Prostate gland (tissue), 2 donors: ENCODE measurements at regions of chr6 and their contacts with region 1.

Region 1: GRCh38 chr6:2353412-2354137 is 108.2 kb upstream of the GMDS start:
- DNase-seq: peak; percentile 62
- H3K4me3 ChIP-seq: no peak overlapping the region
- H3K27ac ChIP-seq: no peak overlapping the region
- H3K4me1 ChIP-seq: no peaks in the 10 kb centered on the region
- H3K27me3 ChIP-seq: no peaks in the 10 kb centered on the region
- CTCF ChIP-seq: peak in 3 of 4 experiments; percentile 77 to 81 (median 80)
- POLR2A ChIP-seq: no peak

Region 2: DNA sequence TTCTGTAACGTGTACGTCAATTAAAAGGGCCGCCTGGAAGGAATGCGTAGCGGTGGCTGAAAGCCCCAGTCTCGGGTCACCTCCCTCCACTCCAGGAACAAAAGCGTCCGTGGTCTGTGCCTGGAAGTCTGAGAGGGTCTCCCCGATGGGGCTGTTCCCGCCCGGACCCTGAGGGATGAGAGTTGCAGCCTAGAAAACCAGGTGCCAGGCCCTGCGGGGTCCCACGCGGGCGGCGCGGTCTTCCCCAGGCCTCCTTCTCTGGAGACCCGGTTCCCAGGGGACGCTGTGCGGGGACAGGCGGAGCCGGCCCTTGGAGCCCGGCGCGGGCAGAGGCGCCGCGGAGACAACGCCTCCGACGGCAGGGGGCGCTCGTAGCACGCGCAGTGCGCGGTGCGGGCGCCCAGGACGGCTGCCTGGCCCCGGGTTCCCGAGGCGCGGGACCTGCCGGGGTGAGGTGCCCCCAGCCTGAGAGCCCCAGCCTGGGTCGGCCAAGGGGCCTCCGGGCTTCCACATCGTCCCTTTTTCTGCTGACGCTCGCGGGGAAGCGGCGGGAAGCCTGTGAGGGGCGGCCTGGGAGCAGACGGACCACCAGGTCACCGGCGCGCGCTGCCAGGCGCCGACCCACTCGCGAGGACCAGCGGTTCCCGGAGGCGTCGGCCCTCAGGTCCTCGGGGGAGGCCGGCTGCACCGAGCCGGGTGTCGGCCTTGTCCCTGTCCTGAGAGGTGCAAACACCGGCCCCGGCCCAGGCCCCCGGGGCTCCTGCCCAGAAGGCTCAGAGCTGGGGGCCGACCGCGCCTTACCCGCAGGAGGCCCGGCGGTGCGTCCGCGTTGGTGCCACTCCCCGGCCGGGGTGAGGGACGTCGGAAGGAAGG is 749.2 kb before region 1 on chr6:
- intact Hi-C with region 1: loop called (anchors 2 kb)
- DNase-seq: peak; percentile 58
- H3K4me3 ChIP-seq: peak overlapping the region; percentile 24 to 26
- H3K27ac ChIP-seq: peak overlapping the region in 1 of 2 donors; percentile 20
- H3K4me1 ChIP-seq: peaks cover 3% of the 10 kb centered on the region
- H3K27me3 ChIP-seq: peaks cover 2% of the 10 kb centered on the region
- CTCF ChIP-seq: peak; percentile 95 to 98 (median 96)
- POLR2A ChIP-seq: no peak